ENCODE measurements at regions of chr1 and their contacts with region 1.

Region 1: DNA sequence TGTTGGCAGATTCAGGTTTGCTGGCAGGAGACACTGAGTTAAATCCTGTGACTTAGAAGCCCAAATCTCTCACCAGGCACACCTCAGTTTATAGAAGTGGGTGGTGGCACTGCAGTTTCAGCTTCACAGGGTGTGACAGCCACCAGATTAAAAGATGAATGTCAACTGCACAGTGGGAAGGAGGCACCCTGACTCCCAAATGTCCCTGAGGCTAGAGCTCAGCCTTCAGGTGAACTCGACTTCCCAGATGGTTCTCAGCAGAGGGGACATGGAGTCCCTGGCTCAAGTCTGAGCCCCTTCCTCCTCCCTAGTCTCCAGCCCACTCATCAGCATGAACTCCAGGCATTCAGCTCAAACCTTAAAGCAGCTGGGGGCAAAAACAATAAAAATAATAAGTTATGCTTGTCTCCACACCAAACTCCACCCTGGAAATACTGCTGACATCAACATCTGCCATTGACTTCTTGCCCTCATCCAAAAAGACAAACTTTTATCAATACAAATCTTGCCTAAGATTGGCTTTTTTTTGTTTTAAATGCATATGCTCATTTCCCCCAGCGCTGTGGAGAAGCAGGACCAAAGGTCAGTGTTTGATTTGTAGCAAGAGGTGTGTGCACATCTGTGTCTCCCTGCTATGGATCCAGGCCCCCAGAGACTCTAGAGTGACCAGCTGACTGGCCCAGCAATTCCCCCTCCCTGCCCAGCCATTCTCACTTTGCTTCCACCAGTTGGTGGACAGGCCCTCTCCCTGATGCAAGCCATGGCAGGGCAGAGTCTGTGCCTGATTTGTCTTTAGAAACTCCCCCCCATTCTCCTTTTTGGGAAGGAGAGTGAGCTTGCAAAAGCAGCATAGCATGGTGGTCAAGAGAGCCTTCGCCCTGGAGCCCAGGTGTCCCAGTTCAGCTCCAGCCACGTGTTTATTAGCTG is 18.5 kb upstream of the S100A7 start:
- DNase-seq: no peak
- ATAC-seq: no peak
- H3K4me3 Mint-ChIP-seq: no peak overlapping the region
- H3K27ac Mint-ChIP-seq: no peak overlapping the region
- H3K4me1 Mint-ChIP-seq: no peaks in the 10 kb centered on the region
- H3K27me3 Mint-ChIP-seq: peaks cover 18% of the 10 kb centered on the region
- CTCF ChIP-seq: no peak

Region 2: GRCh38 chr1:153422450-153423068 is 56.4 kb before region 1 on chr1:
- CTCF ChIA-PET with region 1: no interaction called
- POLR2A ChIA-PET with region 1: no interaction called
- intact Hi-C with region 1: no loop called
- DNase-seq: peak; percentile 78
- ATAC-seq: no peak
- H3K4me3 Mint-ChIP-seq: no peak overlapping the region
- H3K27ac Mint-ChIP-seq: no peak overlapping the region
- H3K4me1 Mint-ChIP-seq: no peaks in the 10 kb centered on the region
- H3K27me3 Mint-ChIP-seq: peaks cover 29% of the 10 kb centered on the region
- CTCF ChIP-seq: no peak

Region 3: DNA sequence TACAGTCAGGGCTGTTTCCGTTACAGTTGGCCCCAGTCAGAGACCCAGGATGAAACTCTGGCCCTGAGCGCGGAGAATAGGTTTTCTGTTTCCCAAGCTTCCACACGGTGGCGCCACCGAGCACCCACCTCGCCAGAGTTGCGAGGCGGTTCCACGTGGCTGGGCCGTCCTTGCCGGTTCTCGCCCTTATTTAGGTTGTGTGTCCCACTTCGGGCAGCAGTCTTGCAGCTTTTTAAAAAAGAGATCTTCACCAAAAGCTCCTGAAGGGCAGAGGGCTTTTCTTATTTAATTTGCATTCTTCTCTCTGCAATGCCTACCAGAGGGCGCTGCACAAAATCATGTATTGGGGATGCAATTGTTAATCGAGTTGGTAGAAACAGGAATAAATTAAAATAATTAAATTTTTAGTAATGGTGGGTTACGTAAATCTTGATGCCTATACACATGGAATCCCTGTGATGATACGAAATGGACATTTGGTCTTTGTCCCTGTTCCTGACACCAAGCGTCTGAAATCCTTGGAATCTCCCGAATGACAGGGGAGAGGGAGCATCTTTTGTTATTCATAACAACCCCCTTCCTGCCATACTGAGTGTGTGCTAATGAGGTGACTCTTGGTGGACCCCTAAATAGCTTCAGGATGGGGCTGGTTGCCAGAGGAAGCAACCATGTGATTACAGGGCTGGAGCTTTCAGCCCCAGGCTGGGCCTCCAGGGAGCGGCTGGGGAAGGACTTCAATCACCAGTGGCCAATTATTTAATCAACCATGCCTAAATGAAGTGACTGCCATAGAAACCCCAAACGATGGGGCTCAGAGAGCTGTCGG is 12.9 kb before region 1 on chr1:
- CTCF ChIA-PET with region 1: interaction called, 12 read pairs
- POLR2A ChIA-PET with region 1: no interaction called
- intact Hi-C with region 1: no loop called
- DNase-seq: peak; percentile 73
- ATAC-seq: peak; percentile 78
- H3K4me3 Mint-ChIP-seq: no peak overlapping the region
- H3K27ac Mint-ChIP-seq: no peak overlapping the region
- H3K4me1 Mint-ChIP-seq: no peaks in the 10 kb centered on the region
- H3K27me3 Mint-ChIP-seq: peaks cover 16% of the 10 kb centered on the region
- CTCF ChIP-seq: peak; percentile 87

Region 4: GRCh38 chr1:153520230-153520629 is 41.3 kb after region 1 on chr1:
- CTCF ChIA-PET with region 1: no interaction called
- POLR2A ChIA-PET with region 1: no interaction called
- intact Hi-C with region 1: no loop called
- DNase-seq: no peak
- ATAC-seq: no peak
- H3K4me3 Mint-ChIP-seq: no peak overlapping the region
- H3K27ac Mint-ChIP-seq: no peak overlapping the region
- H3K4me1 Mint-ChIP-seq: peaks cover 7% of the 10 kb centered on the region
- H3K27me3 Mint-ChIP-seq: no peaks in the 10 kb centered on the region
- CTCF ChIP-seq: no peak